ENCODE measurements at regions of chr3 and their contacts with region 1.

Region 1: DNA sequence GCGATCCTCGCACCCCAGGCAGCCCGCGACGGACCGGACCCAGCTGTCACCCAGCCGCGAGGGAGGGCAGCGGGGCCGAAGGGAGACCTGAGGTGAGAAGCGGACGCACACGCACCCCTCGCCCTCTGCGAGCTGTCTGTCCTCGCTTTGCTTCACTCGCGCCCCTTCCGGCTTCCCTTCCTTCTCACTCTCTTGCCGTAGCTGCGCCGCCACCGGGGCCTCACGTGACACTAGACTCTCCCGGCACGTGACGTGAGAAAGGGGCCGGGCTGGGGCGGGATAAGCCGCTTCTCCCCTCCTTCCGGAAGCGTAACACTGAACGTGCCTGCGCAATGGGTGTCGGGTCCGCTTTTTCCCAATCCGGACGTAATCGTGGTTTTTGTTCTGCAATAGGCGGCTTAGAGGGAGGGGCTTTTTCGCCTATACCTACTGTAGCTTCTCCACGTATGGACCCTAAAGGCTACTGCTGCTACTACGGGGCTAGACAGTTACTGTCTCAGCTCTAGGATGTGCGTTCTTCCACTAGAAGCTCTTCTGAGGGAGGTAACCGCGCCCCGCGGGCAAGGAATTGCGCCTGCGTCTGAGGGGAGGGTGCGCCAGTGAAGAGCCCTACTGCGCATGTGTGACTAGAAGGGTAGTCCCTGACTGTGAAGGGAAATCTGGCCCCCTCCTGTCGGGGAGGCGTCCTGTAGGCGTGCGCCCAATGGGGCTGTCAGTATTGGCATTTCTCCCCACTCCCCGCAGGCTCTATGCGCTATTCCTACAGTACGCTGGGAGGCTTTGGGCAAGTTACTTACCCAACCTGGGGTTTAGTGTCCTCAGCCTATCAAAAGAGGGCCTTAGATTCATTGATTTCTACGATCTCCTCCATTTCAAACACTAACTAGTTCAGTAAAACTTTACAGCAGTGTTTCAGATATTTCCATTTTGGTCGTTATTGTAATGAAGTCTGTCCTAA is at the starts of genes ATG3 and SLC35A5:
- DNase-seq: peak; percentile 94 to 99
- H3K4me3 ChIP-seq: peak within 1 kb of the TSS; percentile 93
- H3K27ac ChIP-seq: peak within 1 kb of the TSS; percentile 88
- H3K4me1 ChIP-seq: peaks cover 25% of the 10 kb centered on the region
- H3K27me3 ChIP-seq: no peaks in the 10 kb centered on the region
- CTCF ChIP-seq: peak; percentile 14; the same call in 1 of the 2 replicates
- total RNA-seq, gene ATG3: 66.8 and 68.9 TPM in 2 replicates
- total RNA-seq, gene SLC35A5: 24.2 and 35.7 TPM in 2 replicates

Region 2: GRCh38 chr3:112395896-112396290 is 166.1 kb before region 1 on chr3:
- CTCF ChIA-PET with region 1: interaction called, 12 read pairs
- POLR2A ChIA-PET with region 1: interaction called, 5 read pairs
- intact Hi-C with region 1: no loop called
- DNase-seq: no peak
- H3K4me3 ChIP-seq: no peak overlapping the region
- H3K27ac ChIP-seq: no peak overlapping the region
- H3K4me1 ChIP-seq: peaks cover 11% of the 10 kb centered on the region
- H3K27me3 ChIP-seq: no peaks in the 10 kb centered on the region
- CTCF ChIP-seq: no peak

Region 3: GRCh38 chr3:112629425-112629824 is 67.4 kb after region 1 on chr3:
- CTCF ChIA-PET with region 1: no interaction called
- POLR2A ChIA-PET with region 1: no interaction called
- intact Hi-C with region 1: no loop called
- DNase-seq: peak in 1 of 2 experiments; percentile 43
- H3K4me3 ChIP-seq: no peak overlapping the region
- H3K27ac ChIP-seq: no peak overlapping the region
- H3K4me1 ChIP-seq: peaks cover 19% of the 10 kb centered on the region
- H3K27me3 ChIP-seq: no peaks in the 10 kb centered on the region
- CTCF ChIP-seq: no peak

Region 4: DNA sequence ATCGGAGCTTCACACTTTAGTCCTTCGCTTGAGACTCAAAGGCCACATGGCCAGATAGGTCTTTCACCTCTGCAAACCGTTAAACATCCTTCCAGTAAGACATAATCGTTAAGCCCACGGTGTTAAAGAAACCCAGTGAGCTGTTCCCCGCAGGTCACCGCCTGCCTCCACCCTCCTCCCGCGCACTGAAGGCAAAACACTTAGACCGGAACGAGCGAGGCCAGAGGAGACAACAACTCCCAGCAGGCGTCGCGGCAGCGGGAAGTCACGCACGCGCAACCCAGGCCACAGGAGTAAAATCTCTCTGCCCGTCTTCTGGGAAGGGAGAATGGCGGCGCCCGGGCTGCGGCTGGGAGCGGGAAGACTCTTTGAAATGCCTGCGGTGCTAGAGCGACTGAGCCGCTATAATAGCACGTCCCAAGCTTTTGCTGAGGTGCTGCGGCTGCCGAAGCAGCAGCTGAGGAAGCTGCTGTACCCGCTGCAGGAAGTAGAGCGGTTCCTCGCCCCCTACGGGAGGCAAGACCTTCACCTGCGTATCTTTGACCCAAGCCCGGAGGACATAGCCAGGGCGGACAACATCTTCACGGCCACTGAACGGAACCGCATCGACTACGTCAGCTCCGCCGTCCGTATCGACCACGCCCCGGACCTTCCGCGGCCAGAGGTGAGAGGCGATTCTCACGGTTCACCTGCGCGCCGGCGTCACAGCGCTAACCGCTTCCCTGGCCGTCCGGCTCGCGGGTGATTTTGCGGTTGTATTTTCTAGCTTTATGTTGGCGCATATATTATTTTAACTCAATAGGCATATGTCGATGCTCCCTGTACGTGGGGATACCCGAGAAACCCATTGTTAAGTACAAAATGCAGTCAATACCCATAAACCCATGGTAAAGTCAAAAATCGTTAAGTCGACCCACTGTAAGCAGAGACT is 428.9 kb after region 1 on chr3 and contains the start of gene GTPBP8:
- CTCF ChIA-PET with region 1: no interaction called
- POLR2A ChIA-PET with region 1: no interaction called
- intact Hi-C with region 1: loop called (anchors 5 kb)
- DNase-seq: peak; percentile 87 to 90
- H3K4me3 ChIP-seq: peak within 1 kb of the TSS; percentile 95
- H3K27ac ChIP-seq: peak within 1 kb of the TSS; percentile 98
- H3K4me1 ChIP-seq: peaks cover 29% of the 10 kb centered on the region
- H3K27me3 ChIP-seq: no peaks in the 10 kb centered on the region
- CTCF ChIP-seq: peak; percentile 25; the same call in 1 of the 2 replicates
- total RNA-seq, gene GTPBP8: 27.9 and 34.3 TPM in 2 replicates

Region 5: DNA sequence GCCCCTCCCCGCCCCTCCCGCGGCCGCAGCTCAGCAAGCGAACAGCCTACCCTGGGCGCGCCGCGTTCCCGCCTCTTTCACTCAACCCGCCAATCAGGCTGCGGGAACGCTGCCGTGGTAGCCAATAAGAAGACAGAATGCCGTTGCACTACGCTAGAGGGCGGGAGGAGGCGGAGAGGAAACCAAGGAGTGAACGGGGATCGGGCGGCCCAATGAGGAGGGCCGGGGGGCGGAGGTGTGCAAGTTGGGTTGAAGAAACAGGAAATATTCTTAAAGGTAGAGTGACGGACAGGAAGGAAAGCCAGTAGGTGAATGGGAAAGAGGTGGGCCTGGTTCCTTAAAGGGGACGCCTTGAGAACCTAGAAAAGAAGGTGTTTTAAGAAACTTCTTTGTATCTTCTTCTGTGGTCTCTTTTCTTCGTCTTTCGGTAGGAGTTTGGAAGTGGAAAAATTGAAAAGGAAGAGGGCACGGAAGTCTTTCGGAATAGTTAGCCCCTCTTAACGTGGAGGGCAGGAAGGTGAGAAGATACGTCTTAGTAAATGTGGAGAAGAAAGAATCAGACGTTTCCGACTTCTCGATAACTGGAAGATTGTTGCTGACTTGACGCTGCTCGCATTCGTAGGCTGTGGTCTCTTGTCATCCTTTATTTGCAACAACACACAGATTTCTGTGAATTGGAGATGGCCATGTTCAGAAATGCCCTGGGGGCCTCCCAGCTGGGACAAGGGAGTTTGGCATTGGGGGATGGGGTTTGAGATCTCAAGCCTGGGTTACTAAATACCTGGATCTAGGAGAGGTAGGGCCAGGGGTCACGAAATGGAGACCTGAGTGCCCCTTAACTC is 1134.9 kb after region 1 on chr3:
- CTCF ChIA-PET with region 1: no interaction called
- POLR2A ChIA-PET with region 1: no interaction called
- intact Hi-C with region 1: loop called (anchors 10 kb)
- DNase-seq: peak; percentile 96 to 99
- H3K4me3 ChIP-seq: peak overlapping the region; percentile 76
- H3K27ac ChIP-seq: peak overlapping the region; percentile 40
- H3K4me1 ChIP-seq: peaks cover 13% of the 10 kb centered on the region
- H3K27me3 ChIP-seq: no peaks in the 10 kb centered on the region
- CTCF ChIP-seq: no peak

Measured in PC-9 (cell line).